ENCODE measurements at regions of chr2 and their contacts with region 1.

Region 1: GRCh38 chr2:201363857-201364560 is 6.9 kb upstream of the FLACC1 start:
- DNase-seq: no peak
- ATAC-seq: peak; percentile 87 to 95 (median 88)
- H3K4me3 ChIP-seq: no peak overlapping the region
- H3K27ac ChIP-seq: no peak overlapping the region
- H3K4me1 ChIP-seq: no peaks in the 10 kb centered on the region
- H3K27me3 ChIP-seq: no peaks in the 10 kb centered on the region
- CTCF ChIP-seq: peak; percentile 77 to 87 (median 82)
- POLR2A ChIP-seq: no peak

Region 2: DNA sequence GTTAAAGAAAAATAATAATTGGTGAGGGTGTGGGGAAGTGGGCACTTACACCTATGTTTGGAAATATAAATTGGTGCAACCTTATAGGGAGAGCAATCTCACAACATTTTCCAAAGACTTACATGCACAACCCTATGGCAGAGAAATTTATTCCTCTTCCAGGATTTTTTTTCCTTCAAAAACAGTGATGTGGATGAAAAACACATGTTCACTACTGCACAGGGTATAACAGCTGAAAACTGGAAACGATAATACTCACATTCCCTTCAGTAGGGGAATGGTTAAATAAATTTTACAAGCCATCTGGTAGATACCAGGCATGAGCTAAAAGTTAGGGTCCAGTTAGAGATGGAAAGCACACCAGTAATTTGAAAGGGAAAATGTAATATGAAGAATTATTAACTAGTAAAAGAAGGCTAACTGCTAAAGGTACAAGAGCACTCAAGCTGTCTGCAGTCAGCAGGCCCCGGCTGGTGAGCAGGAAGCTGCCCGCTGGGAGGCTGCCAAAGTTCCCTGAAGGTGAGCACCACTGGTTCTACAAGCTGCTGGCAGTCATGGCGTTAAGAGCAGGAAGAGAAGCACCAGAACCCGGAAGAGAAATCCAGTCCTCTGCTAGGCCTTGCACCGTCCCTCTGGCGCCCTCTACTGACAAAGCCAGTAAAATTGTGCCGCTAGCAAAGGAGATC is 132.1 kb before region 1 on chr2:
- intact Hi-C with region 1: loop called in 1 of 2 experiments (anchors 5 kb)
- DNase-seq: peak; percentile 88 to 93 (median 89)
- ATAC-seq: peak; percentile 78 to 89 (median 85)
- H3K4me3 ChIP-seq: peak overlapping the region in 1 of 3 donors; percentile 24
- H3K27ac ChIP-seq: peak overlapping the region in 2 of 3 donors; percentile 9 to 27
- H3K4me1 ChIP-seq: peaks cover 0 to 39% (median 5%) of the 10 kb centered on the region in 4 donors
- H3K27me3 ChIP-seq: no peaks in the 10 kb centered on the region
- CTCF ChIP-seq: peak; percentile 91 to 98 (median 94)
- POLR2A ChIP-seq: no peak

Region 3: DNA sequence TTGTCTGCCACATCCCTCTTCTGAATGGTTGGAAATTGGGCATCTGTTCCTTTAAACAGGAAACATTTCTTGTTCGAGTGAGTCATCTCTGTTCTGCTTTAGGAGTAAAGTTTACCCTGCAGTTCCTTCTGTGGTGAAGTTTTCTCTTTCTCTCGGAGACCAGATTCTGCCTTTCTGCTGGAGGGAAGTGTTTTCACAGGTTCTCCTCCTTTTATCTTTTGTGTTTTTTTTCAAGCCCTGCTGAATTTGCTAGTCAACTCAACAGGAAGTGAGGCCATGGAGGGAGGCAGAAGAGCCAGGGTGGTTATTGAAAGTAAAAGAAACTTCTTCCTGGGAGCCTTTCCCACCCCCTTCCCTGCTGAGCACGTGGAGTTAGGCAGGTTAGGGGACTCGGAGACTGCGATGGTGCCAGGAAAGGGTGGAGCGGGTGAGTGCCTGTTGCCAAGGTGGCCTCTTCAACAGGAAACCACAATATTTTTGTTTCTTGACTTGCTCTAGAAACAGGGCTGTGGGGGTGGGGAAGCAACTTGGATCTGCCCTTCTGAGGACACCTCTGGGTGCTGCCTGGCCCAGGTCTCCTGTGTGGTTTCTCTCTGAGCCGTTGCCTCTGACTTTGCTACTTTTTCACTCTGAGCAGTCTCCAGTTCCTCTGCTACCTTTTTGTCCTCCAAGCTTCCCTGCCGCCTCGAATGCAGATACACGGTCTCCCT is 105.9 kb before region 1 on chr2:
- intact Hi-C with region 1: loop called in 1 of 2 experiments (anchors 10 kb)
- DNase-seq: peak; percentile 63 to 74 (median 66)
- ATAC-seq: peak; percentile 66 to 76 (median 70)
- H3K4me3 ChIP-seq: peak overlapping the region; percentile 36 to 53 (median 47)
- H3K27ac ChIP-seq: peak overlapping the region; percentile 65 to 86 (median 72)
- H3K4me1 ChIP-seq: peaks cover 0 to 5% (median 0%) of the 10 kb centered on the region in 4 donors
- H3K27me3 ChIP-seq: no peaks in the 10 kb centered on the region
- CTCF ChIP-seq: no peak
- POLR2A ChIP-seq: peak; percentile 43

Region 4: DNA sequence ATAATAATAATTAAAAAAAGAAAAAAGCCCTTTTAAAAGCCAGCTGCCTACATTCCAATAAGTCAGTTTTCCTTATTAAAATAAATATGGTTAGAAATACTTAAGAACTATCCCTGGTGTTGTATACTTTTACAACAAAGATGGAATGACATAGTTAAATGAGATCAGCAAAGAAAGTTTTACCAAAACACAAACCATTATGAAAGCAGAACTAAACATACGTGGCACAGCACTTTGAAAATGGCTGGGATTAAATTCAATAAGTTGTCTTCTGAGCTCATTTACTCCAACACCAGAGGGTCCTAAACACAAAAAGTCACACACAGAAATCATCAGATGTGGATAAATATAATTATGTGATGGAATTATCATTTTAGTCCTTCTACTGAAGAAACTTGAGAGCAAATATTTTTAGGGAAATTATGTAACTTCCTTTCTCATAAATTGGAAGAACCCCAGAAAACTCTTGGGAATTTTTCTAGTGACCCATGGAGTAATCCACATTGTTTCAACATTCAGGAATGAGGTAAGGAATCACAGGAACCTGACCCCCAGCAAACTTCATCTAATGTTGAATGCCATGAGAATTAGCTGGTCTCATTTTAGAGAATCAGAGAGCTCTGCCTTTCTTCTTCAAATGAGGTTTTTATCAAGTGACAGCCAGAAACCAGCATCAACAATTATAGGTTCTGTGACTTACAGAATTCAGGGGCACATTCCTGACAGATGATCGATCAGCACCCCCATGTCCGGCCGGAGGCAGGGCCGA is 290.8 kb after region 1 on chr2:
- intact Hi-C with region 1: no loop called
- DNase-seq: no peak
- ATAC-seq: no peak
- H3K4me3 ChIP-seq: no peak overlapping the region
- H3K27ac ChIP-seq: no peak overlapping the region
- H3K4me1 ChIP-seq: no peaks in the 10 kb centered on the region
- H3K27me3 ChIP-seq: no peaks in the 10 kb centered on the region
- CTCF ChIP-seq: no peak
- POLR2A ChIP-seq: no peak

Measured in right lobe of liver (tissue), 6 donors.